ENCODE measurements at regions of chr20 and their contacts with region 1.

Region 1: GRCh38 chr20:58294477-58295449 is 14.8 kb upstream of the RAB22A start:
- DNase-seq: no peak
- H3K4me3 ChIP-seq: no peak overlapping the region
- H3K27ac ChIP-seq: no peak overlapping the region
- H3K4me1 ChIP-seq: no peaks in the 10 kb centered on the region
- H3K27me3 ChIP-seq: no peaks in the 10 kb centered on the region
- CTCF ChIP-seq: no peak
- POLR2A ChIP-seq: no peak

Region 2: DNA sequence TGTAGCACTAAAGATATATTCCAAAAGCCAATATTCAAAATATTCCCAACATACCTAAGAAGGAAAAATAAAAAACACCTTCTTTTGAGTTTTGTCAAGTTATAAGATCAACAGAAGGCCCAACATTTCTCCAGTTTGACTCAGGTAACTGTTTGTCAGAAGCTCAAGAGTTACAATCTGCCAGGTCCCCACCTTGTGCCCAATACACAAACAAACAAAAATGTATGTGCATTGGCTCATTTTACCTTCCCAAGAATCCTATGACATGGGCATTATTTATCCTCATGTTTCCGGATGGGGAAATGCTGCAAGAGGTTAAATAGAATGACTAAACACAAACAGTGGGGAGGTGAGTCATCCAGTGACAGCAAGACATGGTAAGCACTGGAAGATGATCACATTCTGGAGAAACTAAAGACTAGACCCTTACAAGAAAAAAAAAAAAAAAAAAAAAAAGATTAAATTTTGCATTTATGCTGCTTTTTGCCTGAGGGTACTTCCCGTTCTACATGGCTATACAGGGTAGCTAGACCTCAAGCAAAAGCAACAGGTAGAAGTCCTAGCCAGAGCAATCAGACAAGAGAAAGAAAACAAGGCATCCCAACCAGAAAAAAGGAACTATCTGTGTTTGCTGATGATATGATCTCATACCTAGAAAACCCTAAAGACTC is 42.7 kb before region 1 on chr20:
- CTCF ChIA-PET with region 1: interaction called, 3 read pairs
- POLR2A ChIA-PET with region 1: no interaction called
- dilution Hi-C with region 1: no loop called
- intact Hi-C with region 1: loop called (anchors 5 kb)
- DNase-seq: peak; percentile 80
- H3K4me3 ChIP-seq: no peak overlapping the region
- H3K27ac ChIP-seq: peak overlapping the region; percentile 73
- H3K4me1 ChIP-seq: peaks cover 21% of the 10 kb centered on the region
- H3K27me3 ChIP-seq: no peaks in the 10 kb centered on the region
- CTCF ChIP-seq: no peak
- POLR2A ChIP-seq: no peak

Region 3: GRCh38 chr20:58340853-58341252 is 46.1 kb after region 1 on chr20:
- CTCF ChIA-PET with region 1: no interaction called
- POLR2A ChIA-PET with region 1: no interaction called
- dilution Hi-C with region 1: no loop called
- intact Hi-C with region 1: no loop called
- DNase-seq: peak; percentile 8
- H3K4me3 ChIP-seq: no peak overlapping the region
- H3K27ac ChIP-seq: peak overlapping the region; percentile 79
- H3K4me1 ChIP-seq: peaks cover 36% of the 10 kb centered on the region
- H3K27me3 ChIP-seq: no peaks in the 10 kb centered on the region
- CTCF ChIP-seq: no peak
- POLR2A ChIP-seq: no peak

Region 4: DNA sequence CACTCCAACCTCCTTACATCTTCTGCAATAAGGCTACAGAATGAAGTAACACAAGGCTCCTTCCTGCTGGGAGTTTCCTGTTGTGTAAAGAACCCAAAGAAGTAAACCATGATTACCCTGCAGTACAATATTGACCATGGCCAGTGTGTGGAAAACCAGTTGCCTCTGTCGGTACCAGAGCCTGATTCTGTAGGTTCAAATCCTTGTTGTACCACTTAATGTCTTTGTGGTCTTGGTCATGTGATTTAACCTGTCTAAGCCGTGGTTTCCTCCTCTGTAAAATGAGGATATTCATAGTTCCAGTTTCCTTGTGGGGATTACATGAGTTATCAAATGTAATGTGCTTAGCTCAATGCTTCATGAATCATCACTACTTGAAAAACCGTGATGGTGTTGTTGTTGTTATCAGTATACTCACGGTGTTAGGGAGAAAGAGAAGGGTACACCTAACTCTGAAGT is 808.1 kb after region 1 on chr20:
- CTCF ChIA-PET with region 1: no interaction called
- POLR2A ChIA-PET with region 1: no interaction called
- dilution Hi-C with region 1: no loop called
- intact Hi-C with region 1: no loop called
- DNase-seq: no peak
- H3K4me3 ChIP-seq: no peak overlapping the region
- H3K27ac ChIP-seq: no peak overlapping the region
- H3K4me1 ChIP-seq: no peaks in the 10 kb centered on the region
- H3K27me3 ChIP-seq: no peaks in the 10 kb centered on the region
- CTCF ChIP-seq: no peak
- POLR2A ChIP-seq: no peak

Measured in endothelial cell of umbilical vein (primary cell).